H1 (cell line): ENCODE measurements at regions of chr6 and their contacts with region 1.

Region 1: DNA sequence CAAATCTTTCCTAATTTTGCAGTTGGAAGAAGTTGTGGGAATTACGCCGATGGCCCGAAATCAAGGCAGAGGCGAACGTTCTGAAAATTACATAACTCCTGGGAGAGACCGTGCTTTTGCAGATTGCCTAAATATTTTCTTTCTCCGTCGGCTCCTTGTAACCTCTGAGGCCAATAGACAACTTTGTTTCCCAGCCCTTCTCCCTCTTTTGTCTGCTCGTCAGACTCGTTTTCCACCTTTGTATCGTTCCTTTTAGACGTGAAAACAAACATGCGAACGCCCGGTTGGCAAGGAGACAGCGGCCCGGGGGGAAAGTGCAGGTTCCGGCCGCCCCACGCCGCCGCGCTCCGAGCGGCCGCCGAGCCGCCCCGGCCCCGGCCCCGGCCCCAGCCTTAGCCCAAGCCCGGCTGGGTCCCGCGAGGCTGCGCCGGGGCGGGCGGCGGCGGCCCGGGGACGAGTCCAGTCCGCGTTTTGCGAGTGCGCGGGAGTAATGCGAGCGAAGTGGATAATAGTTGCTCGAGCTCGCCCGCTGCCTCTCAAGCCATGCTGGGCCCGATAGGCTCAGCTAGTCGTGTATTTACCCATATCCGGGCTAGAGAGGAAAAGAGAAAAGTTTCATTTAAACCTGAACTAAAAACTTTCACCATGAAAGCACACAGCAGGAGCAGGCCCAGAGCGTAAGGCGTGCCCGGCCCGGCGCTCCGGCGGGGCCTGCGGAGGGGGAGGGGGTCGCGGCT is at the start of gene ARID1B:
- DNase-seq: peak in 1 of 2 experiments; percentile 72
- H3K4me3 ChIP-seq: peak within 1 kb of the TSS; percentile 64 to 95 (median 90)
- H3K27ac ChIP-seq: peak within 1 kb of the TSS; percentile 92
- H3K4me1 ChIP-seq: peaks cover 0 to 20% (median 9%) of the 10 kb centered on the region in 4 experiments; a peak in 5 of 7 replicates
- H3K27me3 ChIP-seq: no peaks in the 10 kb centered on the region
- CTCF ChIP-seq: no peak
- EP300 ChIP-seq: no peak
- POLR2A ChIP-seq: peak in 1 of 2 experiments; percentile 70; a peak in 2 of 3 replicates
- RAD21 ChIP-seq: no peak
- total RNA-seq, gene ARID1B: 70.3 and 71.2 TPM in 2 replicates

Region 2: DNA sequence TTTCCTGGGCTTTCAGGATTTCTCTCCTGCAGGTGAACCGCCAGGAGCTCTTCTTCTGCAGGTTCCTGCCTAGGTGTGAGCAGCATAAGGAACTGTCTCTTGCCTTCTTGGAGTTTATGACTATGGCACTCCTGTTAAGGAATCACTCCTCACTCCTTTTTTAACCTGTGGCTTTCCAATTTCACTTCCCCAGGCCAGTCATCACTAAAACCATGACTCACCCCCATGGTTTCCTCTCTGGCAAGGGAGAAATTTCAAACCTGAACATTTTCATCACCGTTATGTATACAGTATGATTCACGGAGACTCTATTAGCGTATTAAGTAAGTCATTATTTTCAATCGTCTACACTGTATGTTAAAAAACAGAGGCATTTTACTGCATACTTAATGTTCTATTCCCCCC is 78.0 kb before region 1 on chr6:
- CTCF ChIA-PET with region 1: no interaction called
- POLR2A ChIA-PET with region 1: no interaction called
- DNase-seq: no peak
- H3K4me3 ChIP-seq: no peak overlapping the region
- H3K27ac ChIP-seq: no peak overlapping the region
- H3K4me1 ChIP-seq: no peaks in the 10 kb centered on the region
- H3K27me3 ChIP-seq: no peaks in the 10 kb centered on the region
- CTCF ChIP-seq: no peak
- EP300 ChIP-seq: no peak
- POLR2A ChIP-seq: no peak
- RAD21 ChIP-seq: no peak

Region 3: DNA sequence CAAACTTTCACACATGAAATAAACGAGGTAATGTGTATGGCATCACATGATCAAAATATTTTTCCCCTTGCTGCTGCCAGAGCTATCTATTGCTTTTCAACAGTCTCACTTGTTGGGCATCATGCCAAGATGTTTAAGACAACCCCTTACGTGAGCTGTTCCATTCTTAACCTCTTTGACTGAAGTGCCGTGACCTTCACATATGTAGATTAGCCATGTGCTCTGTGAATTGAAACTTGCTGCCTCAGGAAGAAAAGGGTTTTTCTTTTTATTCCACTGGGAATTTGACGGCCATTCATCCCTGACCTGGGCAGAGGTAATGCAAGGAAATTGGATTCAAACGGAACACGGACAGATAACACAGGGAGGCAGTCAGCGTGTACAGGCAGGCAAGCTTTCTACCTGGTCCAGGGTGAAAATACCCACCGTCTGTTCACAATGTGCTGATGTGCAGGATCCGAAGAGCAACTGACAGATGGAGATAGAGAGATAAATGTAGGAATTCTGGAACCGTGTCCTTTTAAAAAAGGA is 14.4 kb after region 1 on chr6:
- CTCF ChIA-PET with region 1: interaction called, 3 read pairs
- POLR2A ChIA-PET with region 1: interaction called, 32 read pairs
- DNase-seq: no peak
- H3K4me3 ChIP-seq: peak overlapping the region in 3 of 4 experiments; percentile 15 to 35 (median 24); a peak in 5 of 8 replicates
- H3K27ac ChIP-seq: no peak overlapping the region
- H3K4me1 ChIP-seq: peaks cover 8 to 45% (median 28%) of the 10 kb centered on the region in 4 experiments
- H3K27me3 ChIP-seq: no peaks in the 10 kb centered on the region
- CTCF ChIP-seq: no peak
- EP300 ChIP-seq: no peak
- POLR2A ChIP-seq: no peak
- RAD21 ChIP-seq: no peak